GM12878 (cell line): ENCODE measurements at regions of chr9 and their contacts with region 1.

Region 1: GRCh38 chr9:1604942-1605560 is 410.1 kb upstream of the SMARCA2 start:
- DNase-seq: peak; percentile 11
- ATAC-seq: peak; percentile 98
- H3K4me3 ChIP-seq: no peak overlapping the region
- H3K27ac ChIP-seq: no peak overlapping the region
- H3K4me1 ChIP-seq: no peaks in the 10 kb centered on the region
- H3K27me3 ChIP-seq: no peaks in the 10 kb centered on the region
- CTCF ChIP-seq: peak; percentile 69 to 73 (median 71)
- EP300 ChIP-seq: no peak
- POLR2A ChIP-seq: no peak
- RAD21 ChIP-seq: peak; percentile 99

Region 2: DNA sequence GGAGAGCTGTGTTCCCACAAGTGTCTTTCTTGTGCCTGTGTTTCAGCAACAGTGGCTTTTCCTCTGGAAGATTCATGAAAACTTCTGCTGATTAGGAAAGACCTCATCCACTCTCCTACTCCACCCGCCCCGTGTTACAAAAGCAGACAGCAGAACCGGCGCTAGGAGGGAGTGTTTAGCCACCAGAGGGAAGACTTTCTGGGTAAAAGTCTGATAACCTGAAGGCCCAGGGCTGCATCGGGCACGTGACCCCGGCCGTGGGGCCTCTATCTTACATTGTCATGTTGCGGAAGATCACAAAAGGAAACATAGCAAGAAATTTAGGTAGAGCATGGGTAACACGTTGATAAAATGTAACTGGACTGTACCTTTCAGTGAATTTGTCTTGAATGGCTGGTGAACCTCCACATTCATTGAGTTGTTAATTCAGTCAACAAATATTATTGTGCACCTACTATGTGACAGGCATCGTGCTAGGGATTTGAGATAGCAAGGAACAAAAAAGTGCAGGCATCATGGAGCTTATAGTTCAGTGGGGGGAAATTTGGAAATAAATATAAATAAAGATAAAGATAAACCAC is 586.8 kb before region 1 on chr9:
- CTCF ChIA-PET with region 1: interaction called, 10 read pairs
- POLR2A ChIA-PET with region 1: no interaction called
- RAD21 ChIA-PET with region 1: interaction called, 5 read pairs
- SMC1A ChIA-PET with region 1: interaction called, 5 read pairs
- in situ Hi-C with region 1: loop called (anchors 10 kb)
- intact Hi-C with region 1: loop called (anchors 5 kb)
- DNase-seq: no peak
- ATAC-seq: peak; percentile 93
- H3K4me3 ChIP-seq: no peak overlapping the region
- H3K27ac ChIP-seq: no peak overlapping the region
- H3K4me1 ChIP-seq: no peaks in the 10 kb centered on the region
- H3K27me3 ChIP-seq: peaks cover 3% of the 10 kb centered on the region in 2 experiments; a peak in 3 of 4 replicates
- CTCF ChIP-seq: peak; percentile 25 to 49 (median 33); a peak in 5 of 6 replicates
- EP300 ChIP-seq: no peak
- POLR2A ChIP-seq: no peak
- RAD21 ChIP-seq: peak; percentile 46; the same call in 1 of the 2 replicates

Region 3: DNA sequence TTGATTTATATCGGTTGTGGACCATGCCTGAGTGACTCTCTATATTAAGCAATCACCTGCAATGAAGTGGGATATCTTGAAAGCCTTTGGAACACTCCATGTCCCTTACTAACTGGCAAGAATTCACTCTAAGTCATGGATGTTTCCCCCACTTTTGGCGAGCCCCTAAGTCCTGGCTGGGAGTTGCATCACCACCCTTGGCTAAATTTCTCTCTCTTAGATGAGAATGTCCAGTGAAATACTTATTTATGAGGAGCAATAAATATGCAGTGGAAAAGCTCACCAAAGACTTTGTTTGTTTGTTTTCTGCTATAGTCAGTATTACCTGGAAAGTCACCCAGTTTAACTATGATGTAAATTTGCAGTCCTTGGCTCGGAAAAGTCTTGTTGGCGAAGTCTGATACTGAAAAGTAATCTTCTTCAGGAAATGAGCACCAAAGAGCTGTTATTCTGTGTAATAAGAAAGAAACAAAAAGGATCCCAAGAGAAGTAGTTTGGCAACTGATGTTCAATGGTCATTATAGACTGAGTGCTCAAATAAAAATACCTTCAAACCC is 221.1 kb before region 1 on chr9:
- CTCF ChIA-PET with region 1: no interaction called
- POLR2A ChIA-PET with region 1: no interaction called
- RAD21 ChIA-PET with region 1: no interaction called
- SMC1A ChIA-PET with region 1: no interaction called
- in situ Hi-C with region 1: no loop called
- intact Hi-C with region 1: no loop called
- DNase-seq: no peak
- ATAC-seq: no peak
- H3K4me3 ChIP-seq: no peak overlapping the region
- H3K27ac ChIP-seq: no peak overlapping the region
- H3K4me1 ChIP-seq: no peaks in the 10 kb centered on the region
- H3K27me3 ChIP-seq: peaks cover 0 to 3% of the 10 kb centered on the region in 2 experiments; a peak in 1 of 4 replicates
- CTCF ChIP-seq: no peak
- EP300 ChIP-seq: no peak
- POLR2A ChIP-seq: no peak
- RAD21 ChIP-seq: no peak

Region 4: GRCh38 chr9:1453637-1454610 is 151.1 kb before region 1 on chr9:
- CTCF ChIA-PET with region 1: interaction called, 247 read pairs
- POLR2A ChIA-PET with region 1: no interaction called
- RAD21 ChIA-PET with region 1: interaction called, 190 read pairs
- SMC1A ChIA-PET with region 1: interaction called, 275 read pairs
- in situ Hi-C with region 1: no loop called
- intact Hi-C with region 1: no loop called
- DNase-seq: no peak
- ATAC-seq: no peak
- H3K4me3 ChIP-seq: no peak overlapping the region
- H3K27ac ChIP-seq: no peak overlapping the region
- H3K4me1 ChIP-seq: no peaks in the 10 kb centered on the region
- H3K27me3 ChIP-seq: peaks cover 0 to 2% of the 10 kb centered on the region in 2 experiments; a peak in 2 of 4 replicates
- CTCF ChIP-seq: no peak
- EP300 ChIP-seq: no peak
- POLR2A ChIP-seq: no peak
- RAD21 ChIP-seq: peak; percentile 14; the same call in 1 of the 2 replicates

Region 5: DNA sequence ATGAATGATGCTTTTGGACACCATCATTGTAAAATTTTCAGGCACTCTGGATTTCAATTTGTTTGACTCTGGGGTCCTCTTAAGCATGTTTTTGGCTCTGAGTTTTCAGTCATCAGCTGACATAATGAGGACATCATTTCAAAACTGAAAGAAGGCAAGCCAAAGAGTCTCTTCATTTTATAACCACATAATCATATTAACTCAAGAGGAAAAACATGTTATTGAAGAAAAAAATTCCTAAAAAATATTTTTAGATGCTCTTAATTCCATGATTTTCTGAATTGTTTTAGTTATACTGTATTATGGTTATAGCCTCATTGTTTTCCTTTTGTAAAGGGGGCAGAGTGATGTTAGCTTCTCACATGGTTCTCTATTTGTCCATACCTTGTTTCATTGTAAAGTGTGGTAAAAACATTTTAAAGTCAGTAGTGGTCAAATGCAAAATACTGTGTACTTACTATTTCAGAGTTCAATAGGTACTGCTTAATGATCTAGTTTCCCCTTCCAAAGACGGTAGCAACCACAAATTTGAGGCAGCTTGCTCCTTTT is 82.8 kb before region 1 on chr9:
- CTCF ChIA-PET with region 1: interaction called, 10 read pairs
- POLR2A ChIA-PET with region 1: interaction called, 4 read pairs
- RAD21 ChIA-PET with region 1: interaction called, 5 read pairs
- SMC1A ChIA-PET with region 1: interaction called, 23 read pairs
- in situ Hi-C with region 1: no loop called
- intact Hi-C with region 1: no loop called
- DNase-seq: no peak
- ATAC-seq: peak; percentile 92
- H3K4me3 ChIP-seq: no peak overlapping the region
- H3K27ac ChIP-seq: no peak overlapping the region
- H3K4me1 ChIP-seq: no peaks in the 10 kb centered on the region; the same call in 1 of the 2 replicates
- H3K27me3 ChIP-seq: no peaks in the 10 kb centered on the region
- CTCF ChIP-seq: peak in 1 of 3 experiments; percentile 22; a peak in 1 of 6 replicates
- EP300 ChIP-seq: peak in 1 of 2 experiments; percentile 45; a peak in 1 of 4 replicates
- POLR2A ChIP-seq: no peak
- RAD21 ChIP-seq: 0 out of 2 replicates have a peak, but pooled peaks have one; percentile 14

Region 6: GRCh38 chr9:1554081-1555035 is 50.7 kb before region 1 on chr9:
- CTCF ChIA-PET with region 1: interaction called, 4 read pairs
- POLR2A ChIA-PET with region 1: no interaction called
- RAD21 ChIA-PET with region 1: interaction called, 13 read pairs
- SMC1A ChIA-PET with region 1: interaction called, 7 read pairs
- in situ Hi-C with region 1: no loop called
- intact Hi-C with region 1: no loop called
- DNase-seq: peak; percentile 24
- ATAC-seq: peak; percentile 85
- H3K4me3 ChIP-seq: no peak overlapping the region
- H3K27ac ChIP-seq: no peak overlapping the region
- H3K4me1 ChIP-seq: no peaks in the 10 kb centered on the region
- H3K27me3 ChIP-seq: no peaks in the 10 kb centered on the region; a peak in 1 of 4 replicates
- CTCF ChIP-seq: no peak
- EP300 ChIP-seq: no peak; a peak in 1 of 4 replicates
- POLR2A ChIP-seq: no peak
- RAD21 ChIP-seq: no peak

Region 7: DNA sequence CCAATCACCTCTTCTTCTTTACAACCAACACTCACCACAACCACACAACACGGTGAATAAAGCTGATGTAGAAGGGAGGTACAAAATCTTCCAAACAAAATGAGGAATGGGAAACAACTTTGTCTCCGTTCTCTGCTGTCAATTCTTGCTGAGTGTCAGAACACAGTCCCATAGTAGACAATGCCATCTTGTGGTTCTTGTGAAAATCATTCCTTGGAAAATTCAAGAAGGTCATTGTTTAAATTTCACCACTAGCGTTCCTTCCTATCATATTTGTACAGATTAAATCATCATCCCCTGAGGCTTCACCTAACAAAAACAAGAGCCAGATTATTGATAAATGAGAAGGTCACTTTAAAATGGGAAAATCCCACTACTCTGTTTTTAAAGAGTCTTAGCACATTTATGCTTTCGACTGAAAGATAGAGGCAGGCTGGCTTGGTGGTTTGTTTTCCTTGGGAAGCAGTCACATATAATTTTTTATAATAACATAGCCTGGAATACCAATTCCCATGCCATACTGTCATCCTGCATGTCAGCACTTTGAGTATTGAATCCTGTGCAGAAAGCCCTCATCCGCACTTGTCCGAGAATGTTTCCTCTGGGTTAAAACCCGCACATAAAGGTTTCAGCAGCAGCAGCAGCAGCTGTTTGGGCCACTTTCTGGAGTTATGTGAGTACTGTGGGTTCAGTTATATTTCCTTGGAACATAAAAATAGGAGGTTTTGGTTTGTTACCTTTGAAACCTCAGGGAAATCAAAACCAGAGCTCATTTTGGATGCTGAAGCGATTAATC is 15.1 kb after region 1 on chr9:
- CTCF ChIA-PET with region 1: interaction called, 20 read pairs
- POLR2A ChIA-PET with region 1: no interaction called
- RAD21 ChIA-PET with region 1: no interaction called
- SMC1A ChIA-PET with region 1: interaction called, 7 read pairs
- in situ Hi-C with region 1: no loop called
- intact Hi-C with region 1: no loop called
- DNase-seq: no peak
- ATAC-seq: no peak
- H3K4me3 ChIP-seq: no peak overlapping the region
- H3K27ac ChIP-seq: no peak overlapping the region
- H3K4me1 ChIP-seq: no peaks in the 10 kb centered on the region
- H3K27me3 ChIP-seq: no peaks in the 10 kb centered on the region
- CTCF ChIP-seq: peak in 1 of 3 experiments; percentile 43; a peak in 2 of 6 replicates
- EP300 ChIP-seq: no peak
- POLR2A ChIP-seq: no peak
- RAD21 ChIP-seq: peak; percentile 55